K562 (cell line): ENCODE measurements at regions of chr7 and their contacts with region 1.

Region 1: GRCh38 chr7:109836016-109836415 is 1254.9 kb upstream of the LRRN3 start:
- DNase-seq: no peak
- ATAC-seq: no peak
- H3K4me3 ChIP-seq: no peak overlapping the region
- H3K27ac ChIP-seq: no peak overlapping the region
- H3K4me1 ChIP-seq: no peaks in the 10 kb centered on the region
- H3K27me3 ChIP-seq: no peaks in the 10 kb centered on the region
- CTCF ChIP-seq: no peak
- EP300 ChIP-seq: no peak
- POLR2A ChIP-seq: no peak
- RAD21 ChIP-seq: no peak

Region 2: DNA sequence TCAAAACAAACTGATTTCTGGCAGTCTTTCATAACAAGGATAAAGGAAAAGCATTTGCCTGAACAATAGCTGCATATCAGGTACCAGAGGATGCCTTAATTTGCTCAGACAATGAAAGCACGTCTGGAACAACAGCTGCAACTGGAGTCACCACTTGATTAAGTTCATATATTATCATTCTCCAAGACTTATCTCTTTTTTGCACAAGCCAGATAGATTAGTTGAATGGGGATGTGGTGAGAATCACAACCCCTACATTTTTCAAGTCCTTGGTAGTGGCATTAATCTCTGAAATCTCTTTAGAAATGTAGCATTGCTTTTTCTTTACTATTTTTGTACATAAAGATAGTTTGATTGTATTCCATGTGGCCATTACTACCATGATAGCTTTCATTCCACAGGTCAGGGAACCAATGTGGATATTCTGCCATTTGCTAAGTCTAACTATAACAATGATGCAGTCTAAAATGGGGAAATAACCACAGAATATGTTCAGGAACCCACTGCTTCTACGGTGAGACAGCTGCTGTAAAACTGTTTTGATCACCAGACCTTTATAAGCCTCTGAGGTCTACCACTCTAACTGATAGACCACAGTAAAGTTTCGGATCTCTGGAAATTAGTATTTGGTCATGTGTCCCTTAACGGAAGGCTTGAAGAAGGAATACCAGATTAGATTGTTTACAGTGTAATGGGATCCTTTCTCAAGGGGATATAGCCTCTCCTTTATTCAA is 90.2 kb before region 1 on chr7:
- CTCF ChIA-PET with region 1: no interaction called
- POLR2A ChIA-PET with region 1: no interaction called
- in situ Hi-C with region 1: no loop called
- intact Hi-C with region 1: loop called (anchors 10 kb)
- DNase-seq: no peak
- ATAC-seq: no peak
- H3K4me3 ChIP-seq: no peak overlapping the region
- H3K27ac ChIP-seq: no peak overlapping the region
- H3K4me1 ChIP-seq: no peaks in the 10 kb centered on the region
- H3K27me3 ChIP-seq: no peaks in the 10 kb centered on the region
- CTCF ChIP-seq: no peak
- EP300 ChIP-seq: no peak
- POLR2A ChIP-seq: no peak
- RAD21 ChIP-seq: no peak

Region 3: GRCh38 chr7:109772161-109772560 is 63.9 kb before region 1 on chr7:
- CTCF ChIA-PET with region 1: no interaction called
- POLR2A ChIA-PET with region 1: no interaction called
- in situ Hi-C with region 1: loop called (anchors 10 kb)
- intact Hi-C with region 1: no loop called
- DNase-seq: no peak
- ATAC-seq: no peak
- H3K4me3 ChIP-seq: no peak overlapping the region
- H3K27ac ChIP-seq: no peak overlapping the region
- H3K4me1 ChIP-seq: no peaks in the 10 kb centered on the region
- H3K27me3 ChIP-seq: no peaks in the 10 kb centered on the region
- CTCF ChIP-seq: no peak
- EP300 ChIP-seq: no peak
- POLR2A ChIP-seq: no peak
- RAD21 ChIP-seq: no peak